ENCODE measurements at regions of chr4 and their contacts with region 1.

Region 1: DNA sequence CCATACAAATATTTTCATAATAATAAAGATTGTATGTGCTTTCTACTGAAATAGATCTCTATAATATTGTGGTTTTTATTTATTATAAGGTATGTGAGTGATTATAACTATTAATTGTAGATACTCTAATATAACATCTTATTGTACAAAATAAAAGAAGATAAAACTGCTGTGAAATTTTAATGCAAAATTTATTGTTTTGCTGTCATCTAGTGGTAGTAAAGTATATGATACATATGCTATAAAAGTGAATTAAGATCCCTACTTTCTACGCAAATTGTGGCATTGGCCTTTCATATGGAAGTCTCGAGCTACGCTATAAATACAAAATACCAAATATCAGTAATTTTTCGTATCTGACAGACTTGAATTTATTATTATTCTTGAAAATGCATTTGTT is 19.3 kb downstream of the YIPF7 start:
- DNase-seq: no peak
- H3K4me3 ChIP-seq: no peak overlapping the region
- H3K27ac ChIP-seq: no peak overlapping the region
- H3K4me1 ChIP-seq: no peaks in the 10 kb centered on the region
- H3K27me3 ChIP-seq: no peaks in the 10 kb centered on the region
- CTCF ChIP-seq: no peak
- POLR2A ChIP-seq: no peak

Region 2: DNA sequence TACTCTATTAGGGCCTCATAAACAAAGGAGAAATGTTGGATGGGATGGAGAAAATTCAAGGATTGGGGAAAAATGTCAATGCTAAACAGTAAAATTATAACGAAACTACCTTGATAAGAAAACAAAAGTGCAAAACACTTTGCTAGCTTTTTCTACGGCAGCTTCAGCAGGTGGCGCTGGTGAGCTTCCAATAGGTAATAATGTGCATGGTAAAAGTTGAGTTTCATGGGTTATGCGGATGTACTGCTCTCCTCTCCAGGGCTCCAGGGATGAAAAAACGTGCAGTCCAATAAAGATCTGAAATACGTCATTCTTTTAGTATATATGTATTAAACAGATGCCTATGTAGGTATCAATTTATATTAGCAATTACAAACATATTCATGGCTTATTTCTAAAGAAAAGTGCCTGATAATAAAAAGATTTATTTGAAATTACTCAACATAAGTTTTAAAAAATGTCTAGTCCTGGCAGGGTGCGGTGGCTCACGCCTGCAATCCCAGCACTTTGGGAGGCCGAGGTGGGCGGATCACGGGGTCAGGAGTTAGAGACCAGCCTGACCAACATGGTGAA is 1500.0 kb before region 1 on chr4:
- intact Hi-C with region 1: loop called in 1 of 2 experiments (anchors 10 kb)
- DNase-seq: peak; percentile 39 to 79 (median 66)
- H3K4me3 ChIP-seq: no peak overlapping the region
- H3K27ac ChIP-seq: no peak overlapping the region
- H3K4me1 ChIP-seq: no peaks in the 10 kb centered on the region
- H3K27me3 ChIP-seq: no peaks in the 10 kb centered on the region
- CTCF ChIP-seq: peak; percentile 55 to 72 (median 64)
- POLR2A ChIP-seq: no peak

Measured in adrenal gland (tissue), 19 donors.